ENCODE measurements at regions of chr9 and their contacts with region 1.

Region 1: GRCh38 chr9:131334629-131335367 is 45.3 kb downstream of the PLPP7 start:
- DNase-seq: no peak
- ATAC-seq: no peak
- H3K4me3 ChIP-seq: no peak overlapping the region
- H3K4me3 Mint-ChIP-seq: no peak overlapping the region
- H3K27ac ChIP-seq: no peak overlapping the region
- H3K27ac Mint-ChIP-seq: no peak overlapping the region
- H3K4me1 ChIP-seq: peaks cover 0 to 4% of the 10 kb centered on the region in 2 donors
- H3K4me1 Mint-ChIP-seq: peaks cover 4% of the 10 kb centered on the region
- H3K27me3 ChIP-seq: peaks cover 0 to 4% (median 0%) of the 10 kb centered on the region in 4 experiments
- H3K27me3 Mint-ChIP-seq: no peaks in the 10 kb centered on the region
- CTCF ChIP-seq: no peak

Region 2: GRCh38 chr9:131056781-131057506 is 277.9 kb before region 1 on chr9:
- CTCF ChIA-PET with region 1: interaction called, 57 read pairs
- POLR2A ChIA-PET with region 1: no interaction called
- intact Hi-C with region 1: no loop called
- DNase-seq: no peak
- ATAC-seq: no peak
- H3K4me3 ChIP-seq: no peak overlapping the region
- H3K4me3 Mint-ChIP-seq: no peak overlapping the region
- H3K27ac ChIP-seq: no peak overlapping the region
- H3K27ac Mint-ChIP-seq: no peak overlapping the region
- H3K4me1 ChIP-seq: peaks cover 0 to 3% of the 10 kb centered on the region in 2 donors
- H3K4me1 Mint-ChIP-seq: no peaks in the 10 kb centered on the region
- H3K27me3 ChIP-seq: peaks cover 0 to 2% (median 0%) of the 10 kb centered on the region in 4 experiments
- H3K27me3 Mint-ChIP-seq: peaks cover 4% of the 10 kb centered on the region
- CTCF ChIP-seq: no peak

Region 3: GRCh38 chr9:131237931-131238401 is 96.8 kb before region 1 on chr9:
- CTCF ChIA-PET with region 1: interaction called, 9 read pairs
- POLR2A ChIA-PET with region 1: interaction called, 12 read pairs
- intact Hi-C with region 1: no loop called
- DNase-seq: peak; percentile 79
- ATAC-seq: peak; percentile 95
- H3K4me3 ChIP-seq: peak overlapping the region; percentile 27 to 65 (median 46)
- H3K4me3 Mint-ChIP-seq: peak overlapping the region; percentile 92
- H3K27ac ChIP-seq: peak overlapping the region; percentile 63 to 69
- H3K27ac Mint-ChIP-seq: peak overlapping the region; percentile 97
- H3K4me1 ChIP-seq: peaks cover 19 to 27% of the 10 kb centered on the region in 2 donors
- H3K4me1 Mint-ChIP-seq: peaks cover 20% of the 10 kb centered on the region
- H3K27me3 ChIP-seq: no peaks in the 10 kb centered on the region
- H3K27me3 Mint-ChIP-seq: no peaks in the 10 kb centered on the region
- CTCF ChIP-seq: no peak

Region 4: GRCh38 chr9:131270171-131271015 is 64.4 kb before region 1 on chr9:
- CTCF ChIA-PET with region 1: interaction called, 16 read pairs
- POLR2A ChIA-PET with region 1: no interaction called
- intact Hi-C with region 1: loop called (anchors 10 kb)
- DNase-seq: peak; percentile 69
- ATAC-seq: peak; percentile 15
- H3K4me3 ChIP-seq: peak overlapping the region; percentile 23 to 58 (median 49)
- H3K4me3 Mint-ChIP-seq: peak overlapping the region; percentile 83
- H3K27ac ChIP-seq: peak overlapping the region; percentile 86 to 91
- H3K27ac Mint-ChIP-seq: peak overlapping the region; percentile 96
- H3K4me1 ChIP-seq: peaks cover 75 to 90% of the 10 kb centered on the region in 2 donors
- H3K4me1 Mint-ChIP-seq: peaks cover 78% of the 10 kb centered on the region
- H3K27me3 ChIP-seq: no peaks in the 10 kb centered on the region
- H3K27me3 Mint-ChIP-seq: no peaks in the 10 kb centered on the region
- CTCF ChIP-seq: no peak

Region 5: GRCh38 chr9:131302244-131303075 is 32.3 kb before region 1 on chr9:
- CTCF ChIA-PET with region 1: interaction called, 10 read pairs
- POLR2A ChIA-PET with region 1: no interaction called
- intact Hi-C with region 1: no loop called
- DNase-seq: no peak
- ATAC-seq: no peak
- H3K4me3 ChIP-seq: no peak overlapping the region
- H3K4me3 Mint-ChIP-seq: no peak overlapping the region
- H3K27ac ChIP-seq: no peak overlapping the region
- H3K27ac Mint-ChIP-seq: no peak overlapping the region
- H3K4me1 ChIP-seq: peaks cover 9 to 17% of the 10 kb centered on the region in 2 donors
- H3K4me1 Mint-ChIP-seq: peaks cover 3% of the 10 kb centered on the region
- H3K27me3 ChIP-seq: peaks cover 0 to 5% (median 0%) of the 10 kb centered on the region in 4 experiments
- H3K27me3 Mint-ChIP-seq: peaks cover 5% of the 10 kb centered on the region
- CTCF ChIP-seq: no peak

Region 6: DNA sequence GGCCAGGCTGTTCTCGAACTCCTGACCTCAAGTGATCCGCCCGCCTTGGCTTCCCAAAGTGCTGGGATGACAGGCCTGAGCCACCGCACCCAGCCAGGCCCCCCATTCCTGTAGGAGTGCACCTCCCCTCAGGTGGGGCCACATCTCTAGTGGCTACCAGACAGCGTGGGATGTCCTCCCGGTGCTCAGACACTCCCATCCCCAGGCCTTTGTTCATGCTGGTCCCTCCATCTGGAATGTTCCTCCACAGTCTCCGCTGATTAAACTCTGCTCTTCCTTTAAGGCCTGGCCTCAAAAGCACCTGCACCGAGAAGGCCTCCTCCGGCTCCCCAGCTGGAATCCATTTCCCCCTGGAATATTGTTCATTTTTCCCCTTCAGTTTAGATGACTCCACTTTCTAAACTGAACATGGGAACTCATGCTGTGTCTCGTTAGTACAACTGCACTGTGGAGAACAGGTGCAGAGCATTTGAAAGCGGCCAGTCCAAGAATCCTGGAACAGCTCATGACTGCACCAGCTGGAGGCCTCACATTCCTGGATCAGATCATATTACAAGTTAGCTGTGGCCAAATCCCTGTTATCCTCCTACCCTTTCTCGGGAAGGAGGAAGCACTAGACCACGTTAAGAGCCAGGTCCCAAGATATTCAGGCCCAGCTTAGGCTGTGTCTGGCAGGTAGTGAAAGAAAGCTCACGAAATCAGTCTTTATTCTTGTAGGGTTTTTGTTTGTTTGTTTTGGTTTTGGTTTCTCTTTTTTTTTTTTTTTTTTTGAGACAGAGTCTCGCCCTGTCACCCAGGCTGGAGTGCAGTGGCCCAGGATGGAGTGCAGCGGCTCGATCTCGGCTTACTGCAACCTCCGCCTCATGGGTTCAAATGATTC is 48.3 kb after region 1 on chr9:
- CTCF ChIA-PET with region 1: no interaction called
- POLR2A ChIA-PET with region 1: no interaction called
- intact Hi-C with region 1: no loop called
- DNase-seq: no peak
- ATAC-seq: no peak
- H3K4me3 ChIP-seq: no peak overlapping the region
- H3K4me3 Mint-ChIP-seq: no peak overlapping the region
- H3K27ac ChIP-seq: no peak overlapping the region
- H3K27ac Mint-ChIP-seq: peak overlapping the region; percentile 37
- H3K4me1 ChIP-seq: no peaks in the 10 kb centered on the region
- H3K4me1 Mint-ChIP-seq: no peaks in the 10 kb centered on the region
- H3K27me3 ChIP-seq: no peaks in the 10 kb centered on the region
- H3K27me3 Mint-ChIP-seq: no peaks in the 10 kb centered on the region
- CTCF ChIP-seq: no peak

Region 7: DNA sequence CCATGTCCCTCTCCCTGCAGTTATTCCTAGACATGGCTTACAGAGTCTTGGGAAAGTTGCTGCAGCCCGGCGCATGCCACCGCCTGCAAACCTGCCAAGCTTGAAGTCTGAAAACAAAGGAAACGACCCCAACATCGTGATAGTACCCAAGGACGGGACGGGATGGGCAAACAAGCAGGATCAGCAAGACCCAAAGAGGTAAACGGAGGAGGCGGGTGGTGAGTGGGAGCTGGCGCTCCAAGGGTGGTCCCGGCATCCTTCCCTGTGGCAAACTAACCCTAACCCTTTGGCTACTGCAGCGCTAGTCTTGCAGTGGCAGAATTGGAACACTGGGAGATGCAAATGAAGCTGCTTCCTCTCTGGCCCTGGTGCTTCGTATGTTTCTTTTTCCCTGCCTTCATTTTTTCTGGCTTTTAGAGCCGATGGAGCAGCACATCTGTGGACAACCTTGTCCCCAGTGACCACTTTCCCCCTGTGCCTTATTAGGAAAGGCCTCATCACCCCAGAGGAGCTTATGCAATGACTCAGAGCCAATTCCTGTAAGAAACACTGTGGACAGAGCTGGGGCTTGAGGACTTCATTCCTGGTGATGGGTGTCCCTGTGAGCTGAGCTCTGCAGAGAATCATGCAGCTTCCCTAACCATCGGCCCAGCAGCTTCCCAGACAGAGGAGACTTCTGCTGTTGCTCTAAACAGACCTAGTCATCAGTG is 98.0 kb after region 1 on chr9:
- CTCF ChIA-PET with region 1: no interaction called
- POLR2A ChIA-PET with region 1: no interaction called
- intact Hi-C with region 1: no loop called
- DNase-seq: no peak
- ATAC-seq: no peak
- H3K4me3 ChIP-seq: no peak overlapping the region
- H3K4me3 Mint-ChIP-seq: no peak overlapping the region
- H3K27ac ChIP-seq: no peak overlapping the region
- H3K27ac Mint-ChIP-seq: no peak overlapping the region
- H3K4me1 ChIP-seq: peaks cover 17 to 21% of the 10 kb centered on the region in 2 donors
- H3K4me1 Mint-ChIP-seq: peaks cover 21% of the 10 kb centered on the region
- H3K27me3 ChIP-seq: no peaks in the 10 kb centered on the region
- H3K27me3 Mint-ChIP-seq: no peaks in the 10 kb centered on the region
- CTCF ChIP-seq: no peak

Measured in B cell (primary cell).